ENCODE measurements at regions of chr16 and their contacts with region 1.

Region 1: DNA sequence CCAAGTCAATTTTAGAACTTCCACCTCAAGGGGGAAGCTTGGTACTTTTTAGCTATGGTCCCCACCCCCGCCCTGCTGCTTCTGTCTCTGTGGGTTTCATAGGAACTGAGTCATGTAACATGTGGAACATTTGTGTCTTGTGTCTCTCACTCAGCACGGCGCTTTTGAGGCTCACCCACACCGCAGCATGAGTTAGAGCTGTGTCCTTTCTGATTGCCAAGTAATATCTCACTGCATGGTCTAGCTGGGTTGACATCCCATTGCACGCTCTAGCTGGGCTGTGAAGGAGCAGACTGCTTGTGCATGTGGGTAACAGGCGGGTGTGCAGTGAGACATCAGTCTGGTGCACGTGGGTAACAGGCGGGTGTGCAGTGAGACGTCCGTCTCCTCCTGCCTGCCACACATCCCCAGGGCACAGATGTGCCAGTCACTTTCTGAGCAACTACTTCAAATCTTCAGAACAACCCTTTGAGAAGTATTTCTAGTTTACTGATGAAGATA is 26.4 kb upstream of the SLC7A5 start:
- DNase-seq: no peak
- ATAC-seq: peak in 2 of 8 donors; percentile 19 to 46
- H3K4me3 ChIP-seq: no peak overlapping the region
- H3K27ac ChIP-seq: peak overlapping the region in 1 of 10 donors; percentile 42
- H3K4me1 ChIP-seq: peaks cover 0 to 34% (median 0%) of the 10 kb centered on the region in 9 donors
- H3K27me3 ChIP-seq: peaks cover 0 to 4% (median 0%) of the 10 kb centered on the region in 7 donors
- CTCF ChIP-seq: no peak

Region 2: DNA sequence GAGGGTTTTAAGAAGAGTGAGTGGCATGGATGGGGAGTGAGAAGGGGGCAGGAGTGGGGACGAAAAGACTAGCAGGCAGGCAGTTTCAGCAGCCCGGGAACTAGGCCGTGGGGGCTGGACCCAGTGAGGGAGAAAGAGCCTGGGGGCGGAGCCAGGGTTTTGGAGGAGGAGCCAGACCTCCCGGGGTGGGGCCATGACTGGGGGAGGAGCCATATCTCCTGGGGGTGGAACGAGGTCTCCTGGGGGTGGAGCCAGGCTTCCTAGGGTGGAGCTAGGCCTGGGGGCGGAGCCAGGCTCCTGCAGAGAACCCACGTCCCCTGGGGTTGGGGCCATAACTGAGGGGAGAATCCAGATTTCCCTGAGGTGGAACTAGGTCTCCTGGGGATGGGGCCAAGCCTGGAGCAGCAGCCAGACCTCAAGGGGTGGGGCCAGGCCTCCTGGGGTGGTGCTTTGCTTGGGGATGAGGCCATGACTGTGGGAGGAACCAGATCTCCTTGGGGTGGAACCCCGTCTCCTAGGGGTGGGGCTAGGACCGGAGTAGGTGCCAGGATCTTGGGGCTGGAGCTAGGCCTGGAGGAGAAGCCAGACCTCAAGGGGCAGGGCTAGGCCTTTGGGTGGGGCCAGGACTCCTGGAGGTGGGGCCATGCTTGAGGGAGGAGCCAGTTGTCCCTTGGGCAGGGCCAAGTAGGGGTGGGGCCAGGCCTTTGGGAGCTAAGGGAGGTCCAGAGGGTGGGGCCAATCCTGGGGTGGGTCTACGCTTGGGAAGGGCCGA is 335.1 kb before region 1 on chr16:
- intact Hi-C with region 1: no loop called
- DNase-seq: peak; percentile 19 to 61
- ATAC-seq: peak; percentile 24 to 73 (median 47)
- H3K4me3 ChIP-seq: no peak overlapping the region
- H3K27ac ChIP-seq: no peak overlapping the region
- H3K4me1 ChIP-seq: peaks cover 0 to 20% (median 7%) of the 10 kb centered on the region in 9 donors
- H3K27me3 ChIP-seq: peaks cover 0 to 5% (median 0%) of the 10 kb centered on the region in 7 donors
- CTCF ChIP-seq: no peak

Region 3: GRCh38 chr16:87853411-87854052 is 42.2 kb before region 1 on chr16:
- intact Hi-C with region 1: loop called in 2 of 10 experiments (anchors 10 kb)
- DNase-seq: peak; percentile 90 to 92
- ATAC-seq: peak; percentile 79 to 91 (median 88)
- H3K4me3 ChIP-seq: peak overlapping the region in 7 of 10 donors; percentile 15 to 40 (median 32)
- H3K27ac ChIP-seq: peak overlapping the region in 8 of 10 donors; percentile 8 to 96 (median 60)
- H3K4me1 ChIP-seq: peaks cover 4 to 71% (median 27%) of the 10 kb centered on the region in 9 donors
- H3K27me3 ChIP-seq: peaks cover 0 to 8% (median 0%) of the 10 kb centered on the region in 7 donors
- CTCF ChIP-seq: no peak

Measured in heart right ventricle (tissue), 16 donors.